ENCODE measurements at regions of chr2 and their contacts with region 1.

Region 1: DNA sequence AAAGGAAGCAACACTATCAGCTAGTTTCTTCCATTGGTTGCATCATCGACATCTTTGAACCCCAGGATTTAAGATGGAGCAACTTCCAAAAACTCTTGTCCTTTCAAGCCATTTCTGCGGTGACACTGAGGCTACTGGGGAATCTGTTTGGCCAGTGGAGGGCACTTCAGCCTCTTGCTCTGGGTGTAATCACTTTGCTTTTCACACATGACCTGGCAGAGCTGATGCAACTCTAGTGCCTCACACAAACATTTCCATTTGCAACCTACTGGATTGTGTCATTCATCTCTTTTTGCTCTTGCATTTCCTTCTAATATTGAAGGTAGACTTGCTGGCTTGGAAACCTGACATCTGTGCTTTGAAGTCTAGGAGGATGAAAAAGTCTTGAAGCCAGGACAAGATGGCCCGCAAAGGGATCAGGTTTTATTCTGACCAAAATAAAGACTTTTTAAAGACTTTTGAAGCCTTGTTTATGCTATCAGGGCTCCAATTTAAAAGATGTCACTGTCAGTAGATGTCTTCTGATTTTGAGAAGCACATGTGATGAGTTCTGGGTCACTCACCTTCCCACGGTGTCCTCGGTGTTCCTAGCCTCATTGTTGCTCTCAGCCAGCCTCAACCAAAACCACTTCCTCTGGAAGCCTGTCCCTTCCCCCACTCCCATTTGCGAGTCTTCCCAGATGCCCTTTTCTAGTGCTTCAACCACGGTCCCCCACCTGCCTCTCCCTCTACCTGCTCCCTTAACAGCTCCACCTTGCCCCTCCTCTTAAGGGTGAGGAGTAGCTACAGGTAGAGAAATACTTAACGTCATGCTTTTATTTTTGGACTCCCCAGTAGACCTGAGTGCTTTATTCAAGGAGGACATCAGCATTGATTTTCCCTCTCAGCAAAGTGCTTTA is 69.7 kb upstream of the KCNE4 start:
- DNase-seq: peak; percentile 71
- H3K4me3 ChIP-seq: no peak overlapping the region
- CTCF ChIP-seq: peak; percentile 75

Region 2: GRCh38 chr2:222993920-222994650 is 11.8 kb after region 1 on chr2:
- CTCF ChIA-PET with region 1: interaction called, 24 read pairs
- POLR2A ChIA-PET with region 1: no interaction called
- DNase-seq: peak; percentile 94
- H3K4me3 ChIP-seq: no peak overlapping the region
- CTCF ChIP-seq: no peak

Region 3: DNA sequence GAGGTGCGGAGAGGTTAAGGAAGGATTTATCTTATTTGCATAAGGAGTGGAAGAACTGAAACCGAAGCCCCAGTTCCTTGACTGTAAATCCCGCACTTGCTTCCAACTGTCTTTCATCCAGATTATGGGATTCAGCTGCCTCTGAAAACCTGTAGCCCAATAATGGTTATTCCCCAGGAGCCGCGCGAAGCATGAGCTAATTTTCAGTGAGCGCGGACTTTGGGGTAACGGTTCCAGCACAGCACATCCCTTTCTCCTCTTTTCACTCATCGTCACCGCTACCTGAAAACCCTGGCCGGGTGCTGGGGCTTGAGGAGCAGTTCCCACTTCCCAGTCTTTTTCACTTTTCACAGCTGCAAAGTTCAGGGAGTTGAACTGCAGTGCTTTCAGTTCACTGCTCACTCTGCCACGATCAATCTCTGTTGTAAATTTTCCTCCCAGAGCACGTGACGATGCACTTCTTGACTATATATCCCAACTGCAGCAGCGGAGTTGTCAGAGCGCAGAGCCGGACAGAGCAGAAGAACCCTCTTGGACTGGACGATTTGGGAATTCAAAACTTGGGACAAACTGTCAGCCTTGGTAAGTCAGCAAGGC is 69.5 kb after region 1 on chr2 and contains the start of gene KCNE4:
- CTCF ChIA-PET with region 1: interaction called, 11 read pairs
- POLR2A ChIA-PET with region 1: no interaction called
- DNase-seq: no peak
- H3K4me3 ChIP-seq: peak within 1 kb of the TSS; percentile 62
- CTCF ChIP-seq: no peak

Region 4: DNA sequence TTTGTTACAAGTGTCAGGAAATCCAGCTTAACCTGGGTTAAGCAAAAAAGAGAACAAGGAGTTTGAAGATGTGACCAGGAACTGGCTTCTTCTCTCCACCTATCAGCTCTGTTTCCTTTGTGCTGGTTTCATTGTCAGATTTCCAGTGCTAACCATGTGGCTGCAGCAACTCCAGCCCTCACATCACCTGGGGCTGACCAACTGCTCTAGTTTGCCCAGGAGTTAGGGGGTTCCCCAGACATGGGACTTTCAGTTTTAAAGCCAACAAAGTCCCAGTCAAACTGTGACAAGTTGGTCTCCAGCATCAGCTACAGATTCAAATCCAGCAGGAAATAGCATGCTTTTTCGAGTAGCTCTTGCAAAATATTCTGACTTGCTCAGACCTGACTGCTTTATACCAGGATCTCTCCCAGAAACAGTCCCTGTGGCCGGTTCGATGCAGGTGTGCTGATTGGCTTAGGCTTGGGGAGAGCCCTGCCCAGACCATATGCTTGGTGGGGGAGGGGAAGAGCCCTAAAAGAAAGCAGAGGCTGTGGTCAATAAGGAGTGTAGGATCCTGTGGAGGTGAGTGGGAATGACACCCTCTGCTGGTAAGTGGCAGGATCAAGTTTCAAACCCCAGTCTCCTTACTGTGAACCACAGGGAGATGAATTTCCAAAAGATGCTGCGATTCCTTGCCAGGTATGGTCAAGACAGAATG is 119.2 kb after region 1 on chr2:
- CTCF ChIA-PET with region 1: interaction called, 55 read pairs
- POLR2A ChIA-PET with region 1: no interaction called
- DNase-seq: no peak
- H3K4me3 ChIP-seq: no peak overlapping the region
- CTCF ChIP-seq: peak; percentile 56